MCF 10A (cell line): ENCODE measurements at regions of chr5 and their contacts with region 1.

Region 1: GRCh38 chr5:171418316-171418981 is 998 bp upstream of the FGF18 start:
- DNase-seq: peak; percentile 87
- H3K4me3 Mint-ChIP-seq: peak overlapping the region; percentile 68
- H3K27ac Mint-ChIP-seq: no peak overlapping the region
- H3K4me1 Mint-ChIP-seq: peaks cover 34% of the 10 kb centered on the region
- H3K27me3 Mint-ChIP-seq: no peaks in the 10 kb centered on the region
- CTCF ChIP-seq: peak; percentile 99

Region 2: GRCh38 chr5:171316258-171317121 is 102.0 kb before region 1 on chr5:
- CTCF ChIA-PET with region 1: no interaction called
- POLR2A ChIA-PET with region 1: no interaction called
- intact Hi-C with region 1: no loop called
- DNase-seq: no peak
- H3K4me3 Mint-ChIP-seq: no peak overlapping the region
- H3K27ac Mint-ChIP-seq: no peak overlapping the region
- H3K4me1 Mint-ChIP-seq: peaks cover 9% of the 10 kb centered on the region
- H3K27me3 Mint-ChIP-seq: peaks cover 42% of the 10 kb centered on the region
- CTCF ChIP-seq: no peak

Region 3: GRCh38 chr5:171405601-171406005 is 12.8 kb before region 1 on chr5:
- CTCF ChIA-PET with region 1: interaction called, 12 read pairs
- POLR2A ChIA-PET with region 1: interaction called, 6 read pairs
- intact Hi-C with region 1: no loop called
- DNase-seq: no peak
- H3K4me3 Mint-ChIP-seq: no peak overlapping the region
- H3K27ac Mint-ChIP-seq: peak overlapping the region; percentile 57
- H3K4me1 Mint-ChIP-seq: peaks cover 43% of the 10 kb centered on the region
- H3K27me3 Mint-ChIP-seq: no peaks in the 10 kb centered on the region
- CTCF ChIP-seq: peak; percentile 41

Region 4: DNA sequence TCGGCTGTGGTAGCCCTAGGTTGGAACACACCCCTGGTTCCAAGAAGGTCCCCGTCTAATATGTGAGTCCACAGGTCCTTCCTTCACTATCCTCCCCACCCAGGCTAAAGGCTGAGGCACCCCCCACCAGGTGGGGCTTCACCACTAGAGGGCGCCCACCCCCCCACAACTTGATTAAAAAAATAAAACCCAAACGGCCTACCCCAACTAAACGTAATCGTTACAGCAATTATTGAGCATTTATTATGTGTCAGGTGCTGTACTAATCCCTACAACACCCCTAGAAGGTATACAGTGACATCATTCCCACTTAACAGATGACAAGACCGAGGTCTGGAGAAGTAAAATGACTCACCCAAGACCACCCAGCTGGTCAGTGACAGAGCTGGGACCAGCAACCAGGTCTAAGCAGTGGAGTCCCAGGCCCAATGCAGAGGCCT is 66.0 kb after region 1 on chr5:
- CTCF ChIA-PET with region 1: interaction called, 9 read pairs
- POLR2A ChIA-PET with region 1: interaction called, 5 read pairs
- intact Hi-C with region 1: loop called (anchors 1 kb)
- DNase-seq: peak; percentile 58
- H3K4me3 Mint-ChIP-seq: no peak overlapping the region
- H3K27ac Mint-ChIP-seq: no peak overlapping the region
- H3K4me1 Mint-ChIP-seq: peaks cover 9% of the 10 kb centered on the region
- H3K27me3 Mint-ChIP-seq: peaks cover 19% of the 10 kb centered on the region
- CTCF ChIP-seq: peak; percentile 96

Region 5: DNA sequence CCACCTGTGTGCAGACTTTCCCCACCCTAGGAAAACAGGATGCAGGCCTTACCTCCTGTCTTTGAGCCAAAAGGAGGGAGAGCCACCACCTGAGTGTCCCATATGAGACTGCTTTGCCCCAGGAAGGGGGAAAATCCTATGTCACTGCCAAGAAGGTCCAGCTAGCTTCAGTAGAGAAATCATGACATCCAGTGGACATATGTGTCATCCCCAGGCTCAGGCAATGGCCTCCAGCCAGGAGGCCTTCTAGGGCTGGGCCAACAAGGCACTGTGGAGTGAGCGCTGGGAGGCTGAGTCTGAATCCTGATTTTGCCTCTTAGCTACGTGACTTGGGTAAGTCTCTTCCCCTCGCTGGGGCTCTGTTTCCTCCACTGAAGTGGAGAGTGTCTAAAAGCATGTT is 427.4 kb after region 1 on chr5:
- CTCF ChIA-PET with region 1: interaction called, 27 read pairs
- POLR2A ChIA-PET with region 1: interaction called, 4 read pairs
- intact Hi-C with region 1: loop called (anchors 2 kb)
- DNase-seq: peak; percentile 55
- H3K4me3 Mint-ChIP-seq: no peak overlapping the region
- H3K27ac Mint-ChIP-seq: no peak overlapping the region
- H3K4me1 Mint-ChIP-seq: no peaks in the 10 kb centered on the region
- H3K27me3 Mint-ChIP-seq: no peaks in the 10 kb centered on the region
- CTCF ChIP-seq: no peak

Region 6: GRCh38 chr5:171871711-171872110 is 453.3 kb after region 1 on chr5:
- CTCF ChIA-PET with region 1: interaction called, 16 read pairs
- POLR2A ChIA-PET with region 1: interaction called, 3 read pairs
- intact Hi-C with region 1: no loop called
- DNase-seq: no peak
- H3K4me3 Mint-ChIP-seq: no peak overlapping the region
- H3K27ac Mint-ChIP-seq: no peak overlapping the region
- H3K4me1 Mint-ChIP-seq: peaks cover 18% of the 10 kb centered on the region
- H3K27me3 Mint-ChIP-seq: no peaks in the 10 kb centered on the region
- CTCF ChIP-seq: no peak

Region 7: GRCh38 chr5:171907725-171908343 is 489.4 kb after region 1 on chr5:
- CTCF ChIA-PET with region 1: interaction called, 191 read pairs
- POLR2A ChIA-PET with region 1: interaction called, 16 read pairs
- intact Hi-C with region 1: loop called (anchors 1 kb)
- DNase-seq: peak; percentile 79
- H3K4me3 Mint-ChIP-seq: no peak overlapping the region
- H3K27ac Mint-ChIP-seq: no peak overlapping the region
- H3K4me1 Mint-ChIP-seq: peaks cover 10% of the 10 kb centered on the region
- H3K27me3 Mint-ChIP-seq: no peaks in the 10 kb centered on the region
- CTCF ChIP-seq: peak; percentile 92